Activated T-helper 2 cell treated with anti-CD3 and anti-CD28 coated beads, Interferon-gamma antibody, Interleukin-2, Interleukin-4, amounts not matched to agents 10 μg/mL and 5 μg/mL and 100 μg/mL, durations not matched to agents 14 hours and 24 hours and 36 hours (primary cell): ENCODE measurements at regions of chr4 and their contacts with region 1.

Region 1: GRCh38 chr4:146132445-146132844 is 43.1 kb upstream of the LSM6 start:
- DNase-seq: peak; percentile 15
- H3K4me3 Mint-ChIP-seq: no peak overlapping the region
- H3K27ac Mint-ChIP-seq: peak overlapping the region; percentile 69
- H3K4me1 Mint-ChIP-seq: peaks cover 18% of the 10 kb centered on the region
- H3K27me3 Mint-ChIP-seq: peaks cover 2% of the 10 kb centered on the region

Region 2: GRCh38 chr4:146095091-146095690 is 37.3 kb before region 1 on chr4:
- intact Hi-C with region 1: loop called (anchors 5 kb)
- DNase-seq: no peak
- H3K4me3 Mint-ChIP-seq: no peak overlapping the region
- H3K27ac Mint-ChIP-seq: no peak overlapping the region
- H3K4me1 Mint-ChIP-seq: peaks cover 5% of the 10 kb centered on the region
- H3K27me3 Mint-ChIP-seq: peaks cover 17% of the 10 kb centered on the region

Region 3: GRCh38 chr4:146106556-146106955 is 25.9 kb before region 1 on chr4:
- intact Hi-C with region 1: loop called (anchors 1 kb)
- DNase-seq: no peak
- H3K4me3 Mint-ChIP-seq: no peak overlapping the region
- H3K27ac Mint-ChIP-seq: no peak overlapping the region
- H3K4me1 Mint-ChIP-seq: peaks cover 12% of the 10 kb centered on the region
- H3K27me3 Mint-ChIP-seq: peaks cover 5% of the 10 kb centered on the region

Region 4: GRCh38 chr4:146159384-146160058 is 27.1 kb after region 1 on chr4:
- intact Hi-C with region 1: loop called (anchors 1 kb)
- DNase-seq: no peak
- H3K4me3 Mint-ChIP-seq: no peak overlapping the region
- H3K27ac Mint-ChIP-seq: no peak overlapping the region
- H3K4me1 Mint-ChIP-seq: peaks cover 8% of the 10 kb centered on the region
- H3K27me3 Mint-ChIP-seq: peaks cover 2% of the 10 kb centered on the region

Region 5: GRCh38 chr4:146175541-146176453 is 43.4 kb after region 1 on chr4 and contains the start of gene LSM6:
- intact Hi-C with region 1: loop called (anchors 1 kb)
- DNase-seq: peak; percentile 78
- H3K4me3 Mint-ChIP-seq: peak within 1 kb of the TSS; percentile 86
- H3K27ac Mint-ChIP-seq: peak within 1 kb of the TSS; percentile 71
- H3K4me1 Mint-ChIP-seq: peaks cover 37% of the 10 kb centered on the region
- H3K27me3 Mint-ChIP-seq: no peaks in the 10 kb centered on the region
- total RNA-seq, gene LSM6: 67.2 and 74.1 TPM in 2 replicates

Region 6: DNA sequence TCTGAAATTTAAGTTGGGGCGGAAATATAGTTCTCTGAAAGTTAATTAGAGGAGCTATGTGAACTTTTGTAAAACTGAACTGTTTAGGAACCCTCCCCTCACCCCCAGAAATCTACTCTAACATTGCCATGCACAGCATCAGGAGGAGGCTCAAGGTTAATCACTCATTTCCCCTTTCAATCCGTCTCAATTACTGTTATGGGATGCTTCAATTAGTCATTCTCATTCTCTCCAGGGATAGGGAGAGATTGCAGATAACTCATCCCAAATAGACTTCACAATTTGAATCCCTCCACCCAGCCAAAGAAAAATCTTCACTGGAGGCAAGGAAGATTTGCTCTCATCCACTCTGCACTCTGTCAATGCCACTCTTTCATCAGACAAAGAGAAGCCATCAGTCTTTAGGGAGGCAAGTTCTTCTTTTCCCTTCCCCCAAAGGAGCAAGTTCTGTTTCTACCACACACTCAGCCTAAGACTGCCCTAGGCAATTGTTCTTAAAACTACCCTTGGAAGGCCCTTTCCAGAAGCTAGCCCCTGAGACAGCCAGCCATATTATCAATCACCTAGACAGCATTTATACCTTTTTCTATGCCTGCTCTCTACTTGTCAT is 248.9 kb after region 1 on chr4:
- intact Hi-C with region 1: no loop called
- DNase-seq: no peak
- H3K4me3 Mint-ChIP-seq: no peak overlapping the region
- H3K27ac Mint-ChIP-seq: no peak overlapping the region
- H3K4me1 Mint-ChIP-seq: no peaks in the 10 kb centered on the region
- H3K27me3 Mint-ChIP-seq: no peaks in the 10 kb centered on the region

Region 7: DNA sequence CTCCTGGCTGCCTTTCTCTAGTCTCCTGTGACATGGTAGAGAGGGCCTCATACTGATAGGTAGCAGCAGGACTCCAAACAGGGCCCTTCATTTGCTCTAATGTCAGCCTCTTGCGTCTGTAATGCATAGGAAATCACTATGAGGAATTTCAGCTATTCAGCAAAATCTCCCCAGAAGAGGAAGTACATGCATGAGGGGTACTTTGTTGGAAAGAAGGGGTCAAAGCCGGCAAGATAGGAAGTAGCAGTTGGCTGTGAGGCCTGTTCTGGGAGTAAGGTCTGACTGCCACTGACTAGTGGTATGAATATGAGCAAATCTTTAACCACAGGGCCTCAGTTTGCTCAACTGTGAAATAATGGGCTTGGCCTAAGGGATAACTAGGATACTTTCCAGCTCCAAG is 1882.6 kb after region 1 on chr4:
- intact Hi-C with region 1: no loop called
- DNase-seq: no peak
- H3K4me3 Mint-ChIP-seq: no peak overlapping the region
- H3K27ac Mint-ChIP-seq: no peak overlapping the region
- H3K4me1 Mint-ChIP-seq: peaks cover 2% of the 10 kb centered on the region
- H3K27me3 Mint-ChIP-seq: no peaks in the 10 kb centered on the region